Mucosa of descending colon (tissue), 3 donors: ENCODE measurements at regions of chr3 and their contacts with region 1.

Region 1: DNA sequence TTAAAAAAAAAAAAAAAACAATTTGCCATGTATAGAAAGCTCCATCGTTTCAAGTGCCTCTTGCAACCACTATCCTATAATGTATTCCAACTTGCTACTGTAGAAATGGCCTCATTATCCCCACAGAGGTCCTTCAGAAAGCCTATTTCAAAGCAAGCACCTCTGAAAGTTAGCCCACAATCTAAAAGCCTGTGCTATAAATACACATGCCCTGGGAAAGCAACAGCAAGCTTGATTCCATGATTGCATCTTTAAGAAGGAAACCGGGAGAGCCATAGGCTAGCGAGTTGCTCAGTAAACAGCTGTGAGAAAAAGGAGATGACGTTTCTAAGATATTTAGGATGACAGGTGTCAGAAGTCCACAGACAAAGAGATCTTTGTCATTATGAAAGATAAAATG is 28.3 kb downstream of the TAFA4 start:
- DNase-seq: no peak
- ATAC-seq: no peak
- H3K4me3 ChIP-seq: no peak overlapping the region
- H3K4me1 ChIP-seq: no peaks in the 10 kb centered on the region
- CTCF ChIP-seq: no peak

Region 2: DNA sequence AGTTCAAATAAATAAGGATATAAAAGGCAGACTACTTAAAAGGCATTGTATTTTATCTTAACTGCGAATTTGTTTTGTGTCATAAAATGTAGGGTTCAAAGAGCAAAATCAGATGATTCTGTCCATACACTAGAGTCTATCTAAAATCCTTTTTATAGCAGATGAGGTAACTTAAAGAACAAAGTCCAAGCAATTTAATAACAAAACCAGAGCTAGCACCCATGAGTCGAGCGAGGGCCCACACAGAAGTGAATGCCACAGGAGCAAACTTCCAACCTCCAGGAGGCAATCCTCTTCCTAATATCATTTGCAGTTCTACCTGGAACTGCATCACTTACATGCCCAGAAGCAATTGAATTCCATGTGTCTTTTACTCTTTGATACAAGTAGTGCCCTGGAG is 1941.4 kb before region 1 on chr3:
- intact Hi-C with region 1: loop called in 1 of 2 experiments (anchors 10 kb)
- DNase-seq: peak in 2 of 3 donors; percentile 42 to 47
- ATAC-seq: peak; percentile 97
- H3K4me3 ChIP-seq: no peak overlapping the region
- H3K4me1 ChIP-seq: peaks cover 8% of the 10 kb centered on the region
- CTCF ChIP-seq: no peak